ENCODE measurements at regions of chr5 and their contacts with region 1.

Region 1: DNA sequence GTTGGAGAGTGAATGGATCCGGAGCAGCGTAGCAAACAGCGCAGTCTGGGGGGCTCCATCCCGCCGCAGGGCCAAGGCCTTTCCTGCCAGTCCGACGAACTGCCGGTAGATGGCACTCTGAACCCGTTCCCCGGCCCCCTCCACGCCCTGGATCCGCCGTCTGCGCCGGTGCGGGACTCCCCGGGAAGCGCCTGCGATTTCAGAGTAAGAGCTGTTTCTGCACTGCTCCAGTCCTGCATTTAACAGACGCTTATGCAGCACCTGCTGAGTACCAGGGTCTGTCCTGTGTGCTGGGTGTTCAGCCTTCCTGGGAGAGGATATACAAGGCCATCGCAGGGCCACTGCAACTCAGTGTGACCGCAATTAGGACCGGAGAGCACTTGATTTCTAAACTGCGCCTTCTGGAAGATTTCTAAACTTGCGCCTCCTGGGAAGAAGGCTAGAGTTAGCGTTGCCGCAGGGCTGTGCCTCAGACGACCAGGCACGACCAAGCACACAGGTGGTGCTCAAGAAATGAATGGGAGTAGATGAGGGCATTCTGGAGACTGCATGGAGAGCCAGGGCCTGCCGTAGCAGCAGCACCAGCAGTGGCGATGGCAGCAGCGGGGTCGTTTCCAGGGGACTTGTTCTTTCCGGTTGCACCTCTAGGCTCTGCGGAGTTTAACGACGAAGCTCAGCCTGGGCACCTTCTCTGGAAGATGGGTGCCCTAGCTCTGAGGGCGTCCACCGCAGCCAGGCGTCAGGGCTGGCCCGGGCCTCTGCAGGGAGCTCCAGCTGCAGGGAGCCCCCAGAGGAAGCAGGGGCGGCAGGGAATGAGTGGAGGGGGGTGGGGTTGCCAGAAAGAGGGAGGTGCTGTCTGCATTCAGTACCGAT is 14.3 kb upstream of the TIFAB start:
- DNase-seq: no peak
- H3K4me3 ChIP-seq: peak overlapping the region; percentile 17; the same call in 1 of the 2 replicates
- H3K27ac ChIP-seq: no peak overlapping the region
- H3K27me3 ChIP-seq: peaks cover 58% of the 10 kb centered on the region
- CTCF ChIP-seq: peak; percentile 87

Region 2: DNA sequence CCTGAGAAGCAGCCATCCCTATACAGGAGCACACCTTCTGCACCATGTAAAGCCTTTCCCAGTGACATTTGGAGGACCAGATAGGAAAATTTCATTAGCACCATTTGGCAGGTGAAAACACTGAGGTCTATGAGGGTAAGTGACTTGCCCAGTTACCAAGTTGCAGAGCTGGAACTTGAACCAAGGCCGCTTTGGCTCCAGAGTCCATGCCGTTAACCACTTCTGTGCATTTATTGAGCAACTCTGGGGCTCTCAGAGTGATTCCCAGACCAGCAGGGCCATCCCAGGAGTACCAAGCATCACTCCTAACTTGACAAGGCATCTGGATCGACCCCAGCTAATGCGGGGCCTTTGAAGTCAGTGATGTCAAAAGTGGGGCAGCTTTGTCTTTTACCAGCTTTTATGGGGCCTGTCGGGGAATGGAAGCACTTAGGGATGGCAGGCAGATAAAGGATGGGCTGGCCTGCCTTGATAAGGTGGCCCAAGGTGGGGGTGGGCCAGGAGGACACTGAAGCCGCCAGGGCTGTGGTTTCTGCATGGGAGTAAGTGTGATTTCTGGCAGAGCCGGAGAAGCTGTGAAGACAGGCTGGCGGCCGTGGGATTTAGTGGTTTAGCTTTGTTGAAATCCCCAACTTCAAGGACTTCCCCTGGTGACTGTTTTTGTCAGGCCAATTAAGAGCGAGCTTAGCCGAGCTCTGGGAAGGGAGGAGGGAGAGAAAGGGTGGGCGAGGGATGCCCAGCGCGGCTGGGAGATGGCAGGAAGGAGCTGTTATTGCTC is 194.7 kb before region 1 on chr5:
- CTCF ChIA-PET with region 1: no interaction called
- POLR2A ChIA-PET with region 1: no interaction called
- DNase-seq: no peak
- H3K4me3 ChIP-seq: no peak overlapping the region
- H3K27ac ChIP-seq: no peak overlapping the region
- H3K27me3 ChIP-seq: no peaks in the 10 kb centered on the region
- CTCF ChIP-seq: no peak

Region 3: GRCh38 chr5:135398160-135398852 is 68.1 kb before region 1 on chr5:
- CTCF ChIA-PET with region 1: no interaction called
- POLR2A ChIA-PET with region 1: no interaction called
- DNase-seq: no peak
- H3K4me3 ChIP-seq: peak overlapping the region; percentile 81
- H3K27ac ChIP-seq: peak overlapping the region; percentile 57
- H3K27me3 ChIP-seq: no peaks in the 10 kb centered on the region
- CTCF ChIP-seq: no peak

Region 4: GRCh38 chr5:135476615-135477582 is 10.5 kb after region 1 on chr5:
- CTCF ChIA-PET with region 1: interaction called, 18 read pairs
- POLR2A ChIA-PET with region 1: no interaction called
- DNase-seq: no peak
- H3K4me3 ChIP-seq: no peak overlapping the region
- H3K27ac ChIP-seq: no peak overlapping the region
- H3K27me3 ChIP-seq: peaks cover 41% of the 10 kb centered on the region
- CTCF ChIP-seq: no peak

Region 5: GRCh38 chr5:135488727-135489465 is 22.5 kb after region 1 on chr5:
- CTCF ChIA-PET with region 1: interaction called, 22 read pairs
- POLR2A ChIA-PET with region 1: no interaction called
- DNase-seq: peak; percentile 45
- H3K4me3 ChIP-seq: peak overlapping the region; percentile 61
- H3K27ac ChIP-seq: peak overlapping the region; percentile 11
- H3K27me3 ChIP-seq: peaks cover 18% of the 10 kb centered on the region
- CTCF ChIP-seq: no peak

Region 6: GRCh38 chr5:135543485-135544304 is 77.3 kb after region 1 on chr5:
- CTCF ChIA-PET with region 1: interaction called, 1,313 read pairs
- POLR2A ChIA-PET with region 1: interaction called, 3 read pairs
- DNase-seq: no peak
- H3K4me3 ChIP-seq: peak overlapping the region; percentile 18
- H3K27ac ChIP-seq: no peak overlapping the region
- H3K27me3 ChIP-seq: peaks cover 92% of the 10 kb centered on the region
- CTCF ChIP-seq: no peak